Calu3 (cell line): ENCODE measurements at regions of chr5 and their contacts with region 1.

Region 1: GRCh38 chr5:6765612-6766525 is 52.6 kb downstream of the TENT4A start:
- DNase-seq: peak; percentile 91
- H3K4me3 Mint-ChIP-seq: peak overlapping the region; percentile 48
- H3K27ac Mint-ChIP-seq: peak overlapping the region; percentile 20
- H3K4me1 Mint-ChIP-seq: peaks cover 20% of the 10 kb centered on the region
- H3K27me3 Mint-ChIP-seq: no peaks in the 10 kb centered on the region
- CTCF ChIP-seq: peak; percentile 88

Region 2: DNA sequence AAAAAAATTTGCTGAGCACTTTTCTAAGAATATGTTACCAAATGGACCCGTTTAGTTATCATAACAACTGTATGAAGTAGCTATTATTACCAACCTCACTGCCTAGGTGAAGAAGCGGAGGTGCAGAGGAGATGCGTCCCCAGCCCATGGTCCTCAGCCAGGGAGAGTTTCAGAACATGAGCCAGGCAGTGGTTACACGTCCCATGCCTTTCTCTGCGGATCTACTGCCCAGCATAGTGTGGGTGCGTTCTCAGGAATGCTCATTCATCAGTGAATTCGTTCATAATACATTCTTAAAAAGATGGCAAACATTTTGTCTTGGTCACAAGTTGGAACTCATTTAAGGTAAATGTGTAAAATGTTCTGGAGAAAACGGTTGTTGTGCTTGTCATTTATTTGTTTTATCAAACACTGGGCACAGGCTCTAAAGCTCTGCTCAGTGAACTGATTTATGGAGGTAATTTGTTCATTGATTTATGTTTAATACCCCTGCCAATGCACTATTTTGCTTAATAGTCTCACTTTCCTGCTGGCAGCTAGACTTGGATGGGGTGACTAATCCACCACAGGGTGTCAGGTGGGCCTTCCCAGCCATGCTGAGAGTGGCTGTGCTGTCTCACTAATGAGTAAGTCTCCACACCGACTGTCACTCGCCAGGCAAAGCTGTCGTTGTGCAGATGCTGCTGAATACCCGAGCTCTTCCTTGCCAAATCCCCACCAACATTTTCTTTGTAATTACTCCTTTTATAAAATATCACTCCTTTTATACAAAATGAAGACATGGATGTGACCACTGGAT is 196.2 kb after region 1 on chr5:
- CTCF ChIA-PET with region 1: no interaction called
- intact Hi-C with region 1: no loop called
- DNase-seq: no peak
- H3K4me3 Mint-ChIP-seq: no peak overlapping the region
- H3K27ac Mint-ChIP-seq: no peak overlapping the region
- H3K4me1 Mint-ChIP-seq: no peaks in the 10 kb centered on the region
- H3K27me3 Mint-ChIP-seq: no peaks in the 10 kb centered on the region
- CTCF ChIP-seq: no peak

Region 3: DNA sequence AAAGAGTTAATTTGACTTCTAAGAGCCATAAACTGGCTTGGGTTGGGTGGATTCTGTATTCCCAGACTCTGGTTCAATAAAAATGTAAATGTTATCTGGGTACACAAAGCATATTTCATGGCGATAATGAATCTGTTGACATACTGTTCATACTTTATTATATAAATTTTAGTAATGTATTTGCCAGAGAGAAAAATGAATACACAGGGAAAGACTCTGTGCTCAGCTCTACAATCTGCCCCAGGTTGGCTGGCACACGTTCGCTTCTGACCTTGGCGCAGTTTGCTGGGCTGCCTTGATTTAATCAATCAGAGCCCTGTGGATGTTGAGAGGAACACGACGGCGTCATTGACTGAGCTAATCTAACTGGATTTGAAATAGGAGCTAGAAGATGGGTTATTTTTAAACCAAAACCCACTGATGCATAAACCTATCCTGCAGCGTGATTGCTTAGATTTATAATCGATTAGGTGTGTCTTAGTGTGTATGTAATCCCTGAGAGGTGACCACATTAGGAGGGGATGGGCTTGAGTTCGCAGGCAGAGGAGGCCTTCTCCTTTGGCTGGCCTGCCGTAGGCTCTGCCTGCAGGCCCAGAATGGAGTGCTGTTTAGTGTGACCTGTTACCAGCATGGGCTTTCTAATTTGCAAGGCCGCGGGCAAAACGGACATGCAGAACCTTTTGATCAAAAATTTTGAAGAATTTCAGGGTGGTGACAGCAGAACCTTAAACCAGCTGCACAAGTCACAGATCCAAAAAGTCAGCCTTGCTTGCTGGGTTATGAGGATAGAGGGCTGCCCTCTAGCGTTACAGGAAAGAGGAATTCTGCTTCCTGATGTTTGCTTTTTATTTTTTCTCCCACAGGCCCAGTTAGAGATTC is 626.2 kb after region 1 on chr5:
- CTCF ChIA-PET with region 1: interaction called, 3 read pairs
- intact Hi-C with region 1: loop called (anchors 1 kb)
- DNase-seq: peak; percentile 18
- H3K4me3 Mint-ChIP-seq: no peak overlapping the region
- H3K27ac Mint-ChIP-seq: no peak overlapping the region
- H3K4me1 Mint-ChIP-seq: no peaks in the 10 kb centered on the region
- H3K27me3 Mint-ChIP-seq: peaks cover 9% of the 10 kb centered on the region
- CTCF ChIP-seq: no peak